ENCODE measurements at regions of chr6 and their contacts with region 1.

Region 1: GRCh38 chr6:27864906-27865849 is 47.0 kb downstream of the OR2B2 start:
- DNase-seq: peak; percentile 95
- ATAC-seq: peak; percentile 69
- H3K4me3 ChIP-seq: peak overlapping the region; percentile 65 to 82
- H3K27ac ChIP-seq: peak overlapping the region; percentile 98
- H3K4me1 ChIP-seq: peaks cover 12% of the 10 kb centered on the region
- H3K27me3 ChIP-seq: no peaks in the 10 kb centered on the region
- CTCF ChIP-seq: no peak

Region 2: GRCh38 chr6:25934735-25935306 is 1930.4 kb before region 1 on chr6:
- CTCF ChIA-PET with region 1: no interaction called
- POLR2A ChIA-PET with region 1: no interaction called
- in situ Hi-C with region 1: no loop called
- intact Hi-C with region 1: no loop called
- DNase-seq: no peak
- ATAC-seq: no peak
- H3K4me3 ChIP-seq: no peak overlapping the region
- H3K27ac ChIP-seq: no peak overlapping the region
- H3K4me1 ChIP-seq: no peaks in the 10 kb centered on the region
- H3K27me3 ChIP-seq: peaks cover 13% of the 10 kb centered on the region; the same call in 1 of the 2 replicates
- CTCF ChIP-seq: no peak

Region 3: DNA sequence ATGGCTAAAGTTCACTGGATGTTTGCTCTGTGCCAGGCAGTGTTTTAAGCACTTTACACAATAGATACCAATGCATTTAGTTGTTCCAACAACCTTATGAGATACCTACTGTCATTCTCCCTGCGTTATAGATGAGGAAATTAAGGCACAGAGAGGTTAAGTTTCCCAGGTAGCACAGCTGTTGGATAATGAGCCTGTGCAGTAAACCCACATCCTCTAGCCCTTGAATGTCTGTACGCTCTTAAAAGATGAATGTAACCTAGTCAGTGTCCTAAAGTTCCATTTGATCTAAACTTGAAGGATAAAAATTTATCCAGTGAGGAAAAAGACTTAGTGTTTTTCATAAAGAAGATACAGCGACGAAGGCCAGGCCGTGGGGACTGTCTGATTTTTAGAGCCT is 1750.0 kb before region 1 on chr6:
- CTCF ChIA-PET with region 1: no interaction called
- POLR2A ChIA-PET with region 1: interaction called, 12 read pairs
- in situ Hi-C with region 1: no loop called
- intact Hi-C with region 1: no loop called
- DNase-seq: no peak
- ATAC-seq: no peak
- H3K4me3 ChIP-seq: no peak overlapping the region
- H3K27ac ChIP-seq: peak overlapping the region; percentile 3; the same call in 1 of the 2 replicates
- H3K4me1 ChIP-seq: peaks cover 22% of the 10 kb centered on the region; the same call in 1 of the 2 replicates
- H3K27me3 ChIP-seq: no peaks in the 10 kb centered on the region
- CTCF ChIP-seq: no peak

Region 4: GRCh38 chr6:26234421-26235296 is 1630.5 kb before region 1 on chr6:
- CTCF ChIA-PET with region 1: no interaction called
- POLR2A ChIA-PET with region 1: interaction called, 15 read pairs
- in situ Hi-C with region 1: no loop called
- intact Hi-C with region 1: no loop called
- DNase-seq: no peak
- ATAC-seq: peak; percentile 88
- H3K4me3 ChIP-seq: peak overlapping the region; percentile 78 to 87
- H3K27ac ChIP-seq: peak overlapping the region; percentile 99
- H3K4me1 ChIP-seq: peaks cover 25% of the 10 kb centered on the region
- H3K27me3 ChIP-seq: no peaks in the 10 kb centered on the region
- CTCF ChIP-seq: no peak

Region 5: DNA sequence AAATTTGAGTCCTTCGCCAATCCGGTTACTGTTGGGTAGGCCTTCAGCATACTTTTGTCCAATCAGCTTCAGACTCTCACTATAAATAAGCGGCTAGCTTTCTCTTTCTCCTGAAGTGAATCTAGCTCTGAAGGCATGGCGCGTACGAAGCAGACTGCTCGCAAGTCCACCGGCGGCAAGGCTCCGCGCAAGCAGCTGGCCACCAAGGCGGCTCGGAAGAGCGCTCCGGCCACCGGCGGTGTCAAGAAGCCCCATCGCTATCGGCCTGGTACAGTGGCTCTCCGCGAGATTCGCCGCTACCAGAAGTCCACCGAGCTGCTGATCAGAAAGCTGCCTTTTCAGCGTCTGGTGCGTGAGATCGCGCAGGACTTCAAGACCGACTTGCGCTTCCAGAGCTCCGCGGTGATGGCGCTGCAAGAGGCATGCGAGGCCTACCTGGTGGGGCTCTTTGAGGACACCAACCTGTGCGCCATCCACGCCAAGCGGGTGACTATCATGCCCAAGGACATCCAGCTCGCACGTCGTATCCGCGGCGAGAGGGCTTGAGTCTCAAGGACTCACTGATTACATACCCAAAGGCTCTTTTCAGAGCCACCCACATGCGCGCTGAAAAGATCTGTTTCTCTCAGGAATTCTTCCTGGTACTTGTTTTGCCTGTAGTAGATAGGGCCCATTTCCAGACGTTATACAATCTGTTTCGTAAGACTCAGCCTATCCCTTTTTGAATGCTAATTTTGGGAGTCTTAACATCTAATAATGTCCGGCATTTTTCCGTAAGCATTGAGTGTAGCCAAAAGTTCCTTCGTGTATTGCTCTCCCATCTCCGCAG is 55.0 kb before region 1 on chr6:
- CTCF ChIA-PET with region 1: no interaction called
- POLR2A ChIA-PET with region 1: interaction called, 7 read pairs
- in situ Hi-C with region 1: no loop called
- intact Hi-C with region 1: loop called (anchors 2 kb)
- DNase-seq: peak; percentile 96
- ATAC-seq: peak; percentile 44
- H3K4me3 ChIP-seq: peak overlapping the region; percentile 78 to 93
- H3K27ac ChIP-seq: peak overlapping the region; percentile 100
- H3K4me1 ChIP-seq: peaks cover 17% of the 10 kb centered on the region
- H3K27me3 ChIP-seq: no peaks in the 10 kb centered on the region
- CTCF ChIP-seq: no peak

Region 6: GRCh38 chr6:27825025-27825793 is 40.0 kb before region 1 on chr6:
- CTCF ChIA-PET with region 1: no interaction called
- POLR2A ChIA-PET with region 1: interaction called, 22 read pairs
- in situ Hi-C with region 1: loop called (anchors 5 kb)
- intact Hi-C with region 1: no loop called
- DNase-seq: no peak
- ATAC-seq: peak; percentile 10; the same call in 1 of the 2 replicates
- H3K4me3 ChIP-seq: peak overlapping the region; percentile 68 to 89
- H3K27ac ChIP-seq: peak overlapping the region; percentile 89
- H3K4me1 ChIP-seq: peaks cover 2% of the 10 kb centered on the region; the same call in 1 of the 2 replicates
- H3K27me3 ChIP-seq: no peaks in the 10 kb centered on the region
- CTCF ChIP-seq: no peak

Region 7: DNA sequence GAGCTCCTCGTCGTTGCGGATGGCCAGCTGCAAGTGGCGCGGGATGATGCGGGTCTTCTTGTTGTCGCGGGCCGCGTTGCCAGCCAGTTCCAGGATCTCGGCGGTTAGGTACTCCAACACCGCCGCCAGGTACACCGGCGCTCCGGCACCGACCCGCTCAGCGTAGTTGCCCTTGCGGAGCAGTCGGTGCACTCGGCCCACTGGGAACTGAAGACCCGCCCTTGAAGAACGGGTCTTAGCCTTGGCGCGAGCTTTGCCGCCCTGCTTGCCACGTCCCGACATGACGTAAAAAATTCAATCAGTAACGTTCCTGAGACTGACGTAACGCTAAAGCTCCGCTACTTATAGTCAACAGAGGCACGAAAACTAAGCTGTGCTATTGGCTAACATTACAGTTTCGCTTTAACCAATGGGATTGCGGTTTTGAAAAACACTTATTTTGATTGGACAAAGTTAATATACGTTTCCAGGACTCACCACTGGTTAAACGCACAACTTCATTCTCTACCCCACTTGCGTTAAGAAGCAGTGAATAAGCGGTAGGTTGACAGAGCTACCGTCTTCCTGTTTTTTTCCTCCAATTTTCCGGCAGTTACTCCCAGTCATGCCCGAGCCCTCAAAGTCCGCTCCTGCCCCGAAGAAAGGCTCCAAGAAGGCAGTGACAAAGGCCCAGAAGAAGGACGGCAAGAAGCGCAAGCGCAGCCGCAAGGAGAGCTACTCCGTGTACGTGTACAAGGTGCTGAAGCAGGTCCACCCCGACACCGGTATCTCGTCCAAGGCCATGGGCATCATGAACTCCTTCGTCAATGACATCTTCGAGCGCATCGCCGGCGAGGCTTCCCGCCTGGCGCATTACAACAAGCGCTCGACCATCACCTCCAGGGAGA is 26.9 kb before region 1 on chr6:
- CTCF ChIA-PET with region 1: no interaction called
- POLR2A ChIA-PET with region 1: interaction called, 90 read pairs
- in situ Hi-C with region 1: no loop called
- intact Hi-C with region 1: loop called (anchors 2 kb)
- DNase-seq: peak; percentile 100
- ATAC-seq: peak; percentile 90
- H3K4me3 ChIP-seq: peak overlapping the region; percentile 86 to 90
- H3K27ac ChIP-seq: peak overlapping the region; percentile 100
- H3K4me1 ChIP-seq: peaks cover 17% of the 10 kb centered on the region; the same call in 1 of the 2 replicates
- H3K27me3 ChIP-seq: no peaks in the 10 kb centered on the region
- CTCF ChIP-seq: no peak

Region 8: DNA sequence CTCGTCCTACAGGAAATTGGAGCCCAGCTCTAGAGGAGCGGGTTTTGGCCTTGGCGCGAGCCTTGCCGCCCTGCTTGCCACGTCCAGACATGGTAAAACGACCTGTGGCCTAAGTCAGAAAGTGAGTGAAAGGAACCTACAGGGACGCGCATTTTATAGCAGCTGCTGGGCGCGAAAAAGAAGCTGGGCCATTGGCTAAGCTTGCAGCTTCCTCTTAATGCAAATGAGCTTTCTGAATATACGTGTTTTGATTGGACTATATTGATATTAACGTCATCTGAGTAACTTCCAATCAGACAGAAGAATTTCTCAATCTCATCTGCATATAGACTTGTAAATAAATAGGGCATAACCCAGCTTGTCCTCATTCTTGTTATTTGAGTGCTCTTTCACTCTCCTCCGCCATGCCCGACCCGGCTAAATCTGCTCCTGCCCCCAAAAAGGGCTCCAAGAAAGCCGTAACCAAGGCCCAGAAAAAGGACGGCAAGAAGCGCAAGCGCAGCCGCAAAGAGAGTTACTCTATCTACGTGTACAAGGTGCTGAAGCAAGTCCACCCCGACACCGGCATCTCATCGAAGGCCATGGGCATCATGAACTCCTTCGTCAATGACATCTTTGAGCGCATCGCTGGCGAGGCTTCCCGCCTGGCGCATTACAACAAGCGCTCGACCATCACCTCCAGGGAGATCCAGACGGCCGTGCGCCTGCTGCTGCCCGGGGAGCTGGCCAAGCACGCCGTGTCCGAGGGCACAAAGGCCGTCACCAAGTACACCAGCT is 28.1 kb after region 1 on chr6:
- CTCF ChIA-PET with region 1: interaction called, 3 read pairs
- POLR2A ChIA-PET with region 1: interaction called, 119 read pairs
- in situ Hi-C with region 1: no loop called
- intact Hi-C with region 1: no loop called
- DNase-seq: peak; percentile 97
- ATAC-seq: peak; percentile 81
- H3K4me3 ChIP-seq: peak overlapping the region; percentile 87 to 90
- H3K27ac ChIP-seq: peak overlapping the region; percentile 99
- H3K4me1 ChIP-seq: peaks cover 30% of the 10 kb centered on the region
- H3K27me3 ChIP-seq: no peaks in the 10 kb centered on the region
- CTCF ChIP-seq: no peak

Region 9: GRCh38 chr6:27966044-27966443 is 100.9 kb after region 1 on chr6:
- CTCF ChIA-PET with region 1: no interaction called
- POLR2A ChIA-PET with region 1: no interaction called
- in situ Hi-C with region 1: no loop called
- intact Hi-C with region 1: no loop called
- DNase-seq: no peak
- ATAC-seq: no peak
- H3K4me3 ChIP-seq: no peak overlapping the region
- H3K27ac ChIP-seq: no peak overlapping the region
- H3K4me1 ChIP-seq: no peaks in the 10 kb centered on the region
- H3K27me3 ChIP-seq: no peaks in the 10 kb centered on the region
- CTCF ChIP-seq: no peak

Region 10: GRCh38 chr6:28218271-28219248 is 353.4 kb after region 1 on chr6:
- CTCF ChIA-PET with region 1: no interaction called
- POLR2A ChIA-PET with region 1: no interaction called
- in situ Hi-C with region 1: no loop called
- intact Hi-C with region 1: no loop called
- DNase-seq: no peak
- ATAC-seq: peak; percentile 90
- H3K4me3 ChIP-seq: peak overlapping the region; percentile 55 to 77
- H3K27ac ChIP-seq: peak overlapping the region; percentile 92
- H3K4me1 ChIP-seq: peaks cover 33% of the 10 kb centered on the region
- H3K27me3 ChIP-seq: no peaks in the 10 kb centered on the region
- CTCF ChIP-seq: no peak

Measured in Panc1 (cell line).